Dendritic cell treated with granulocyte-macrophage colony-stimulating factor and Interleukin-4, amounts not matched to agents 40 ng/mL and 50 ng/mL, for 4 days (primary cell): ENCODE measurements at regions of chr2 and their contacts with region 1.

Region 1: GRCh38 chr2:101533561-101534148 is 58.7 kb upstream of the RFX8 start:
- H3K4me3 Mint-ChIP-seq: no peak overlapping the region
- H3K27ac Mint-ChIP-seq: peak overlapping the region; percentile 14
- H3K4me1 Mint-ChIP-seq: peaks cover 23% of the 10 kb centered on the region
- H3K27me3 Mint-ChIP-seq: peaks cover 3% of the 10 kb centered on the region

Region 2: DNA sequence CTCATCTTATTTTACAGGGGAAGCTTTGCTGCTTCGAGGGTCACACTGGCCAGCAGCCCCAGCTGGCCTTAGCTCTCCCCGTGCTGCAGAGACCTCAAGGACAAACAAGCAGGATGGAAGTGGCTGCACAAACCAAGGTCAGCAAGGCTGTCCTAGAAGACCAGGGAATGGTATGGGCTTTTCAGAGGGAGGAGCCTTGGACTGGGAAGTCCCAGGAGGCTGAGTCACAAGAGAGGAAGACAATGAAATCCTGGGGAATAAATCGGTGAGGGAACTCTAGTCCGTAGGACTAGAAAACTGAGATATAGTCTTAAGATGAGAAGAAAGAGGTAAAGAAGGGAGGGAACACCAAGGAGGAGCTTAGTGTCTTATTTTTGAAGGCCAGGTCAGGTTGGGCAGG is 162.0 kb before region 1 on chr2:
- intact Hi-C with region 1: no loop called
- H3K4me3 Mint-ChIP-seq: no peak overlapping the region
- H3K27ac Mint-ChIP-seq: no peak overlapping the region
- H3K4me1 Mint-ChIP-seq: peaks cover 16% of the 10 kb centered on the region
- H3K27me3 Mint-ChIP-seq: peaks cover 12% of the 10 kb centered on the region

Region 3: GRCh38 chr2:101496279-101496678 is 37.4 kb before region 1 on chr2:
- intact Hi-C with region 1: loop called (anchors 2 kb)
- H3K4me3 Mint-ChIP-seq: no peak overlapping the region
- H3K27ac Mint-ChIP-seq: no peak overlapping the region
- H3K4me1 Mint-ChIP-seq: peaks cover 5% of the 10 kb centered on the region
- H3K27me3 Mint-ChIP-seq: peaks cover 9% of the 10 kb centered on the region